Pancreas (tissue), 10 donors: ENCODE measurements at regions of chr7 and their contacts with region 1.

Region 1: DNA sequence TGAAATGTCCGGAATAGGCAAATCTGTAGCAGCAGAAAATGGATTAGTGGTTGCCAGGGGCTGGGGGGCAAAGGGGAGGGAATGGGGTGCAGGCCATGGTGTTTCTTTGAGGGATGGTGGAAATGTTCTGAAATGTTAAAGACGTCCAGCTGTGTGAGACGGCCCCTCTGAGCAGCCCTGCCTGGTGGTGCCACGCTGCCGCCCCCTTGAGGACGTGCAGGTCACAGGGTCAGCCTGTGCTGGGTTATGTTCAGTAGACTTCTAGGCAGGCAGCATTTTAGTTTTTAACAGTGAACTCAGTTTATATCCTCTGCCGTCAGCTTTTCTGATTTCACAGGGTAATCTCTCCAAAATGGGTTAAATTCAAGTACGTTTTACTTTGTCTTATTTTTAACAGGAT is 9.4 kb downstream of the NUB1 start:
- DNase-seq: no peak
- ATAC-seq: peak in 1 of 4 donors; percentile 18
- H3K4me3 ChIP-seq: no peak overlapping the region
- H3K27ac ChIP-seq: no peak overlapping the region
- H3K4me1 ChIP-seq: peaks cover under 1 to 20% (median 4%) of the 10 kb centered on the region in 3 donors
- H3K27me3 ChIP-seq: no peaks in the 10 kb centered on the region
- CTCF ChIP-seq: no peak

Region 2: GRCh38 chr7:151315038-151315655 is 35.9 kb before region 1 on chr7:
- intact Hi-C with region 1: loop called in 2 of 3 experiments (anchors 2 to 5 kb)
- DNase-seq: peak in 5 of 6 donors; percentile 60 to 80 (median 67)
- ATAC-seq: peak; percentile 89 to 97 (median 94)
- H3K4me3 ChIP-seq: peak overlapping the region in 1 of 4 donors; percentile 18
- H3K27ac ChIP-seq: no peak overlapping the region
- H3K4me1 ChIP-seq: no peaks in the 10 kb centered on the region
- H3K27me3 ChIP-seq: no peaks in the 10 kb centered on the region
- CTCF ChIP-seq: peak; percentile 74 to 82 (median 76)